CD4-positive, alpha-beta memory T cell (primary cell): ENCODE measurements at regions of chr5 and their contacts with region 1.

Region 1: DNA sequence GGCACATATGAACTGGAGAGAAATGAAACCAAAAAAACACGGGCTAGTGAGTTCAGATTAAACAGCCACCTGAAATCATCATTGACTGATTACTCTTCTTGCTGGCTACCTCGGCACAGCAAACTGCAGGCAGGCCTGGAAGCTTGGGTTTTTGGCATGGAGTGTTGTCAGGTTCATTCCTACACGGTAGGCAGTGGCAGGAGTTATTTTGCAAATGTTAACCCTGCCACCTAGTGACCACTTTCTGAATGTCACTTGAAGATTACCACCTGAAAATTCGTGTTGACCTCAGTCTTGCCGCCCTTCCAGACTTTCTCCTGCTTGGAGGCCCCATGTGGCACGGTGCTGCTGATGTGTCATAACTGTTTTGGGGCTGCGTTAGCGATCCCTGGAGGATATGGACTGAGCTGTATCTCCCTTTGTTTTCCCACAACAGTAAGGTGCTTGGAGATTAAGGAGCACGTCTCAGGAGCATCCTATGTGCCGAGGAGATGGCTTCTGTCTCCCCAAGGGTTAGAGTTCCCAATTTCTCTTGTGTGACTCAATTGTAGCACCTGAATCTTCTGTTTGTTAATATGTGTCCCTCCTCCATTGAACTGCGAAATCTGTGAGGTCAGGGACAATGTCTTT is 12.7 kb upstream of the CD180 start:
- DNase-seq: peak; percentile 69 to 78 (median 74)
- H3K4me3 ChIP-seq: no peak overlapping the region
- H3K4me3 Mint-ChIP-seq: peak overlapping the region in 4 of 8 donors; percentile 38 to 63 (median 61)
- H3K27ac ChIP-seq: no peak overlapping the region
- H3K27ac Mint-ChIP-seq: peak overlapping the region; percentile 72 to 93 (median 83)
- H3K4me1 ChIP-seq: peaks cover 55% of the 10 kb centered on the region
- H3K4me1 Mint-ChIP-seq: peaks cover 54 to 62% (median 58%) of the 10 kb centered on the region in 4 donors
- H3K27me3 ChIP-seq: no peaks in the 10 kb centered on the region
- H3K27me3 Mint-ChIP-seq: no peaks in the 10 kb centered on the region

Region 2: DNA sequence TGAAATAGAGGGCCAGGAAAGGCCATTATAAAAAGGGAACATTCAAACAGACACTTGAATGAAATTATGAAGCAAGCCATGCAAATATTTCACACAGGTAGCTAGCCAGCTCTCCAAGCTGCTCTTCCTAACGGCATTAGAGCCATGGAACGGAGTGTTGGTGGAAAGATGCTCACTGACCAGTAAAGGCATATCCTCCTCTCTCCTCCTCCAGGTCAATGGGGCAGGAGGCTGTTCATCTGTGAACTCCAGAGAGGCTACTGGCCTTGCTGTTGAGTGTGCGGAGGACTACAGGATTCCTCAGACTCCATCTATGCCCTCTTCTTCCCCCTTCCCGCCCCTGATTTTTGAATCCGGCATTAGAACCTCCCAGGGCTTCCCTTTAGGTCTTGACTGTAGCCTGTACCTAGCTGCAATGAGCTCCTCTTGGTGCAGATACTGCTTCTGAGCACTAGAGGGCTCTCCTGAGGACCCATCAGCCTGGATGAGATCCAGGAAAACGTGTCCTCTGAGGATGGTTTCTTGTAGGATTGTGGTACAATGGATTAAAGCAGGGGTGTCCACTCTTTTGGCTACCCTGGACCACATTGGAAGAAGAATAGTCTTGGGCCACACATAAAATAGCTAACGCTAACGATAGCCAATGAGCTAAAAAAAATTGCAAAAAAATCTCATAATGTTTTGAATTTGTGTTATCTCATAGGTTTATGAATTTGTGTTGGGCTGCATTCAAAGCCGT is 903.0 kb before region 1 on chr5:
- CTCF ChIA-PET with region 1: interaction called, 4 read pairs
- POLR2A ChIA-PET with region 1: no interaction called
- intact Hi-C with region 1: loop called (anchors 2 kb)
- DNase-seq: peak in 4 of 5 donors; percentile 17 to 24 (median 19)
- H3K4me3 ChIP-seq: no peak overlapping the region
- H3K4me3 Mint-ChIP-seq: no peak overlapping the region
- H3K27ac ChIP-seq: no peak overlapping the region
- H3K27ac Mint-ChIP-seq: peak overlapping the region in 2 of 7 donors; percentile 16 to 35
- H3K4me1 ChIP-seq: no peaks in the 10 kb centered on the region
- H3K4me1 Mint-ChIP-seq: peaks cover 3 to 9% (median 4%) of the 10 kb centered on the region in 4 donors
- H3K27me3 ChIP-seq: no peaks in the 10 kb centered on the region
- H3K27me3 Mint-ChIP-seq: peaks cover 10 to 15% of the 10 kb centered on the region in 2 donors

Region 3: GRCh38 chr5:66987949-66988838 is 221.1 kb before region 1 on chr5:
- CTCF ChIA-PET with region 1: interaction called, 28 read pairs
- POLR2A ChIA-PET with region 1: interaction called, 5 read pairs
- intact Hi-C with region 1: loop called (anchors 1 kb)
- DNase-seq: peak in 4 of 5 donors; percentile 32 to 39 (median 36)
- H3K4me3 ChIP-seq: no peak overlapping the region
- H3K4me3 Mint-ChIP-seq: no peak overlapping the region
- H3K27ac ChIP-seq: no peak overlapping the region
- H3K27ac Mint-ChIP-seq: peak overlapping the region in 1 of 7 donors; percentile 48
- H3K4me1 ChIP-seq: peaks cover 3% of the 10 kb centered on the region
- H3K4me1 Mint-ChIP-seq: peaks cover 0 to 4% (median 2%) of the 10 kb centered on the region in 4 donors
- H3K27me3 ChIP-seq: no peaks in the 10 kb centered on the region
- H3K27me3 Mint-ChIP-seq: no peaks in the 10 kb centered on the region

Region 4: GRCh38 chr5:67156976-67157583 is 52.2 kb before region 1 on chr5:
- CTCF ChIA-PET with region 1: interaction called, 851 read pairs
- POLR2A ChIA-PET with region 1: interaction called, 703 read pairs
- intact Hi-C with region 1: loop called (anchors 1 kb)
- DNase-seq: peak; percentile 58 to 64 (median 61)
- H3K4me3 ChIP-seq: no peak overlapping the region
- H3K4me3 Mint-ChIP-seq: peak overlapping the region in 4 of 8 donors; percentile 8 to 55 (median 45)
- H3K27ac ChIP-seq: no peak overlapping the region
- H3K27ac Mint-ChIP-seq: peak overlapping the region; percentile 47 to 88 (median 83)
- H3K4me1 ChIP-seq: peaks cover 55% of the 10 kb centered on the region
- H3K4me1 Mint-ChIP-seq: peaks cover 43 to 58% (median 51%) of the 10 kb centered on the region in 4 donors
- H3K27me3 ChIP-seq: no peaks in the 10 kb centered on the region
- H3K27me3 Mint-ChIP-seq: no peaks in the 10 kb centered on the region

Region 5: GRCh38 chr5:67182301-67182790 is 26.9 kb before region 1 on chr5:
- CTCF ChIA-PET with region 1: interaction called, 10 read pairs
- POLR2A ChIA-PET with region 1: interaction called, 8 read pairs
- intact Hi-C with region 1: loop called (anchors 2 kb)
- DNase-seq: no peak
- H3K4me3 ChIP-seq: no peak overlapping the region
- H3K4me3 Mint-ChIP-seq: peak overlapping the region in 3 of 8 donors; percentile 23 to 82 (median 26)
- H3K27ac ChIP-seq: no peak overlapping the region
- H3K27ac Mint-ChIP-seq: peak overlapping the region in 4 of 7 donors; percentile 31 to 77 (median 59)
- H3K4me1 ChIP-seq: peaks cover 35% of the 10 kb centered on the region
- H3K4me1 Mint-ChIP-seq: peaks cover 36 to 64% (median 50%) of the 10 kb centered on the region in 4 donors
- H3K27me3 ChIP-seq: no peaks in the 10 kb centered on the region
- H3K27me3 Mint-ChIP-seq: no peaks in the 10 kb centered on the region

Region 6: GRCh38 chr5:68215208-68215897 is 1006.1 kb after region 1 on chr5 and contains the start of gene PIK3R1:
- CTCF ChIA-PET with region 1: no interaction called
- POLR2A ChIA-PET with region 1: interaction called, 13 read pairs
- intact Hi-C with region 1: no loop called
- DNase-seq: peak; percentile 91 to 94 (median 92)
- H3K4me3 ChIP-seq: peak within 1 kb of the TSS; percentile 85 to 89
- H3K4me3 Mint-ChIP-seq: peak within 1 kb of the TSS; percentile 91 to 97 (median 94)
- H3K27ac ChIP-seq: peak within 1 kb of the TSS; percentile 80
- H3K27ac Mint-ChIP-seq: peak within 1 kb of the TSS; percentile 93 to 96 (median 95)
- H3K4me1 ChIP-seq: peaks cover 43% of the 10 kb centered on the region
- H3K4me1 Mint-ChIP-seq: peaks cover 37 to 51% (median 46%) of the 10 kb centered on the region in 4 donors
- H3K27me3 ChIP-seq: no peaks in the 10 kb centered on the region
- H3K27me3 Mint-ChIP-seq: no peaks in the 10 kb centered on the region
- total RNA-seq, gene PIK3R1: 151 to 152 TPM